PC-9 (cell line): ENCODE measurements at regions of chr14 and their contacts with region 1.

Region 1: GRCh38 chr14:69204753-69205152 is 13.5 kb downstream of the EXD2 start:
- DNase-seq: no peak
- H3K4me3 ChIP-seq: no peak overlapping the region
- H3K27ac ChIP-seq: no peak overlapping the region
- H3K4me1 ChIP-seq: no peaks in the 10 kb centered on the region
- H3K27me3 ChIP-seq: no peaks in the 10 kb centered on the region
- CTCF ChIP-seq: no peak

Region 2: DNA sequence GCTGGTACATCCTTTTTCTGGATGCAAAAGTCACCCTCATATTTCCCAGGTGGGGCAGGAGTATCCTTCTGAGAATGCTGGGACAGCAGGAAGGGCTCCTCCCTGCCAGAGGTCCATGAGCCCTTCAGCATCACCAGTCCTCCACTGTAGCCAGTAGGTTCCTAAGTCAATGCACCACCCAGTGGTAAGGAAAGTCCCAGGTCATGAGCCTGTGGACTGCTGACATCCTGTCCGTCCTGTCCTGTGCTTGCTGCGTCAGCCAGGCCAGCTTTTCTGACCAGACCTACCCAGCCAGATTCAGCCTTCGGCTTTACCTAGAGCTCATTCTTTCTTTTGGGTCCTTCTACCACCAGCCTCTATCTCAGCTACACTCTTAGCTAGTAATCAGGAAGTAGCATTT is 202.7 kb before region 1 on chr14:
- CTCF ChIA-PET with region 1: interaction called, 14 read pairs
- POLR2A ChIA-PET with region 1: no interaction called
- intact Hi-C with region 1: no loop called
- DNase-seq: peak; percentile 51 to 66
- H3K4me3 ChIP-seq: no peak overlapping the region
- H3K27ac ChIP-seq: no peak overlapping the region
- H3K4me1 ChIP-seq: peaks cover 20% of the 10 kb centered on the region
- H3K27me3 ChIP-seq: no peaks in the 10 kb centered on the region
- CTCF ChIP-seq: peak; percentile 33; the same call in 1 of the 2 replicates

Region 3: GRCh38 chr14:69260861-69261564 is 56.3 kb after region 1 on chr14:
- CTCF ChIA-PET with region 1: no interaction called
- POLR2A ChIA-PET with region 1: no interaction called
- intact Hi-C with region 1: no loop called
- DNase-seq: peak in 1 of 2 experiments; percentile 48
- H3K4me3 ChIP-seq: no peak overlapping the region
- H3K27ac ChIP-seq: no peak overlapping the region
- H3K4me1 ChIP-seq: no peaks in the 10 kb centered on the region
- H3K27me3 ChIP-seq: peaks cover 20% of the 10 kb centered on the region; the same call in 1 of the 2 replicates
- CTCF ChIP-seq: no peak; the same call in 1 of the 2 replicates